ENCODE measurements at regions of chr22 and their contacts with region 1.

Region 1: GRCh38 chr22:26502688-26503561 is 9.3 kb downstream of the TFIP11 start:
- DNase-seq: peak; percentile 29
- H3K4me3 ChIP-seq: peak overlapping the region; percentile 38
- H3K27ac ChIP-seq: peak overlapping the region; percentile 75
- H3K4me1 ChIP-seq: peaks cover 31% of the 10 kb centered on the region
- H3K27me3 ChIP-seq: no peaks in the 10 kb centered on the region
- CTCF ChIP-seq: peak; percentile 64

Region 2: DNA sequence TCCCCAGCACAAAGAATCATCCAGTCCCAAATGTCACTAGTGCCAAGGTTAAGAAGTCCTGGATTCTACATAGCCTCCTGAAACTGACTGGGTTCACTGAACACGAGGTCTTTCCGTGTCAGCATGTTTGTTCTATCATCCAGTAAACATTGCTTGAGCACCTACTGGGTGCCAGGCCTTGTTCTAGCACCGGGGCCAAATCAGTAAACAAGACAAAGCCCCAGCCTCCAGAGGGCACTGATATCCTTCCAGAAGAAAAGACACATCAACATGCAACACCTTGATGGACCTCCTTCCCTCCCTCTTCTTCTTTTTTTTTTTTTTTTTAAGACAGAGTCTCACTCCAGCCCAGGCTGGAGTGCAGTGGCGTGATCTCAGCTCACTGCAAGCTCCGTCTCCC is 60.1 kb after region 1 on chr22:
- intact Hi-C with region 1: no loop called
- DNase-seq: no peak
- H3K4me3 ChIP-seq: no peak overlapping the region
- H3K27ac ChIP-seq: no peak overlapping the region
- H3K4me1 ChIP-seq: peaks cover 53% of the 10 kb centered on the region
- H3K27me3 ChIP-seq: no peaks in the 10 kb centered on the region
- CTCF ChIP-seq: peak; percentile 12

Region 3: GRCh38 chr22:26589845-26590736 is 87.2 kb after region 1 on chr22 and contains the start of gene TPST2:
- intact Hi-C with region 1: loop called (anchors 10 kb)
- DNase-seq: peak; percentile 80
- H3K4me3 ChIP-seq: peak within 1 kb of the TSS; percentile 98
- H3K27ac ChIP-seq: peak within 1 kb of the TSS; percentile 92
- H3K4me1 ChIP-seq: peaks cover 55% of the 10 kb centered on the region
- H3K27me3 ChIP-seq: peaks cover under 1% of the 10 kb centered on the region
- CTCF ChIP-seq: peak; percentile 31
- total RNA-seq, gene TPST2: 28.5 TPM

Region 4: GRCh38 chr22:26660961-26661578 is 158.1 kb after region 1 on chr22:
- intact Hi-C with region 1: loop called (anchors 5 kb)
- DNase-seq: no peak
- H3K4me3 ChIP-seq: no peak overlapping the region
- H3K27ac ChIP-seq: no peak overlapping the region
- H3K4me1 ChIP-seq: peaks cover 26% of the 10 kb centered on the region
- H3K27me3 ChIP-seq: peaks cover 84% of the 10 kb centered on the region
- CTCF ChIP-seq: no peak

Region 5: DNA sequence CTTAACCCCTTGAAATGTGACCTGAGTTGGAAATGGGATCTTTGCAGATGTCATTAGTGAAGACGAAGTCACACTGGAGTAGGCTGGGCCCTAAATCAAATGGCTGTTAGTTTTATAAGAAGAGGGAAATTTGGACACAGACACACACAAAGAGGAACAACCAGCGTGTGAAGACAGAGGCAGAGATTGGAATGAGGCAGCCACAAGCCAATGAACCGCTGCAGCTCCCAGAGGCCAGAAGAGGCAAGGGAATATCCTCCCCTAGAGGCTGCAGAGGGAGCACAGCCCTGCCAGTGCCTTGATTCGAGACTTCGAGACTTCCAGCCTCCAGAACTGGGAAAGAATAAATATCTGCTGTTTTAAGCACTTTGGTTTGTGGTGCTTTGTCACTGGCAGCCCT is 814.2 kb after region 1 on chr22:
- intact Hi-C with region 1: no loop called
- DNase-seq: no peak
- H3K4me3 ChIP-seq: no peak overlapping the region
- H3K27ac ChIP-seq: no peak overlapping the region
- H3K4me1 ChIP-seq: peaks cover 13% of the 10 kb centered on the region
- H3K27me3 ChIP-seq: peaks cover 58% of the 10 kb centered on the region
- CTCF ChIP-seq: no peak